K562 (cell line): ENCODE measurements at regions of chr2 and their contacts with region 1.

Region 1: GRCh38 chr2:27552941-27553340 is 29.9 kb upstream of the ZNF512 start:
- DNase-seq: no peak
- ATAC-seq: no peak
- H3K4me3 ChIP-seq: no peak overlapping the region
- H3K27ac ChIP-seq: no peak overlapping the region
- H3K4me1 ChIP-seq: no peaks in the 10 kb centered on the region
- H3K27me3 ChIP-seq: no peaks in the 10 kb centered on the region
- CTCF ChIP-seq: no peak
- EP300 ChIP-seq: no peak
- POLR2A ChIP-seq: no peak
- RAD21 ChIP-seq: no peak

Region 2: GRCh38 chr2:27071277-27071989 is 481.5 kb before region 1 on chr2 and contains the start of gene OST4:
- CTCF ChIA-PET with region 1: no interaction called
- POLR2A ChIA-PET with region 1: no interaction called
- in situ Hi-C with region 1: no loop called
- intact Hi-C with region 1: no loop called
- DNase-seq: peak; percentile 95 to 96 (median 96)
- ATAC-seq: peak; percentile 93
- H3K4me3 ChIP-seq: peak within 1 kb of the TSS; percentile 82
- H3K27ac ChIP-seq: peak within 1 kb of the TSS; percentile 86
- H3K4me1 ChIP-seq: peaks cover 38 to 51% of the 10 kb centered on the region in 2 experiments
- H3K27me3 ChIP-seq: no peaks in the 10 kb centered on the region
- CTCF ChIP-seq: 0 out of 6 replicates have a peak, but pooled peaks of 1 of the 3 experiments have one; percentile 12
- EP300 ChIP-seq: 0 out of 2 replicates have a peak, but pooled peaks have one; percentile 3
- POLR2A ChIP-seq: peak; percentile 89
- RAD21 ChIP-seq: no peak
- polyA plus RNA-seq, gene OST4: 1,144 to 1,155 TPM

Region 3: DNA sequence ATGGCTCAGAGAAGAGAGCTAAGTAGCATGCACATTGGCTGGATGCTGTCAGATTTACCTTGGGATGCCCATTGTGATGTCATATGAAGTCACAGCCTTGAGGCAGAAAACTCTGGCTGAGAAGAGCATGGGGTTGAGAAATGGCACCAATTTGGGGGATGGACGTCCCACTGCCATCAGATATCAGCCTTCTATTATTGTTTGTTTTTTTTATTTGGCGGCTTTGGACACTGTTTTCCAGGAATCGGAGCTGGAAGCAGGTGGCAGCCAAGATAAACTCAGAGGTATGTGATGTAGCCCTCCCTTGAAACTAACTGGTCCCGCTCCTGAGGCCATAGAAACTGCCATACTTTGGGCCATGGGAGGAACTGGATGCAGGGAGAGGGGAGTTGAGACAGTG is 15.7 kb before region 1 on chr2:
- CTCF ChIA-PET with region 1: no interaction called
- POLR2A ChIA-PET with region 1: interaction called, 11 read pairs
- in situ Hi-C with region 1: no loop called
- intact Hi-C with region 1: no loop called
- DNase-seq: peak; percentile 48 to 80 (median 60)
- ATAC-seq: peak; percentile 78
- H3K4me3 ChIP-seq: no peak overlapping the region
- H3K27ac ChIP-seq: peak overlapping the region; percentile 63
- H3K4me1 ChIP-seq: peaks cover 19 to 21% of the 10 kb centered on the region in 2 experiments
- H3K27me3 ChIP-seq: no peaks in the 10 kb centered on the region
- CTCF ChIP-seq: no peak
- EP300 ChIP-seq: peak; percentile 76; the same call in 1 of the 2 replicates
- POLR2A ChIP-seq: no peak
- RAD21 ChIP-seq: no peak